IMR-90 (cell line): ENCODE measurements at regions of chr5 and their contacts with region 1.

Region 1: GRCh38 chr5:136159457-136159856 is 26.8 kb downstream of the SMAD5 start:
- DNase-seq: peak; percentile 53
- ATAC-seq: peak; percentile 88
- H3K4me3 ChIP-seq: no peak overlapping the region
- H3K27ac ChIP-seq: no peak overlapping the region
- H3K4me1 ChIP-seq: peaks cover 8% of the 10 kb centered on the region
- H3K27me3 ChIP-seq: no peaks in the 10 kb centered on the region
- CTCF ChIP-seq: no peak
- POLR2A ChIP-seq: no peak
- RAD21 ChIP-seq: no peak

Region 2: DNA sequence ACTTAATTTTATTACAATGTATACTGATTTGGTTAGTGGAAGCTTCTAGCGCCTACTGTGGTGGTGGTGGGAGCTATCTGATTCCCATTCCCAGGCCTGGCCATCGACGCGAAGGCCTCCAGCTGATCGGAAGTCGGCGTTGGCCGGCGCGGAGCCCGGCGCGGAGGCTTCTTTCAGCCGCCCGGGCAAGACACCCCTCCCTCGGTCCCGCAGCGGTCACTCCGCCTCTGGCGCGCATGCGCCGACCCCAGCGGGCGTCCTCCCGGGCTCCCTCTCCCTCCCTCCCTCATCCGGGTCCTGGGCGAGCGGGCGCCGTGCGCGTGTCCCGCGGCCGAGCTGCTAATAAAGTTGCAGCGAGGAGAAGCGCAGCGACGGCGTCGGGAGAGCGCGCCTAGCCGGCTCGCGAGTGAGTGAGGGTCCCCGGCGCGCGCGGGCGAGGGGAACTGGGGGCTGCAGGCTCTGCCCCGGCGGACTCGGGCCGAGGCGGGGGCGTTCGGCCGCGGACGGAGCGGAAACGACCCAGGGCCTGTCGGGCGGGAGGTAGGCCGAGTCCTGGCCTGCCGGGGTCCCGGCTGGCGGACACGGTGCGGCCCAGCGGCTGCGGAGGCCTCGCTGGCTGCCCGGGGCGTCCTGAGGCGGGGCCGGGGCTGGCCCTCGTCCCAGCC is 26.8 kb before region 1 on chr5 and contains the start of gene SMAD5:
- CTCF ChIA-PET with region 1: interaction called, 3 read pairs
- POLR2A ChIA-PET with region 1: no interaction called
- dilution Hi-C with region 1: no loop called
- in situ Hi-C with region 1: no loop called
- intact Hi-C with region 1: loop called (anchors 1 kb)
- DNase-seq: peak; percentile 95
- ATAC-seq: peak; percentile 94
- H3K4me3 ChIP-seq: peak within 1 kb of the TSS; percentile 81
- H3K27ac ChIP-seq: peak within 1 kb of the TSS; percentile 76
- H3K4me1 ChIP-seq: peaks cover 2% of the 10 kb centered on the region
- H3K27me3 ChIP-seq: peaks cover 5% of the 10 kb centered on the region
- CTCF ChIP-seq: 0 out of 2 replicates have a peak, but pooled peaks have one; percentile 5
- POLR2A ChIP-seq: no peak; the same call in none of the 2 replicates
- RAD21 ChIP-seq: no peak
- total RNA-seq, gene SMAD5: 73.3 and 101 TPM in 2 replicates

Region 3: DNA sequence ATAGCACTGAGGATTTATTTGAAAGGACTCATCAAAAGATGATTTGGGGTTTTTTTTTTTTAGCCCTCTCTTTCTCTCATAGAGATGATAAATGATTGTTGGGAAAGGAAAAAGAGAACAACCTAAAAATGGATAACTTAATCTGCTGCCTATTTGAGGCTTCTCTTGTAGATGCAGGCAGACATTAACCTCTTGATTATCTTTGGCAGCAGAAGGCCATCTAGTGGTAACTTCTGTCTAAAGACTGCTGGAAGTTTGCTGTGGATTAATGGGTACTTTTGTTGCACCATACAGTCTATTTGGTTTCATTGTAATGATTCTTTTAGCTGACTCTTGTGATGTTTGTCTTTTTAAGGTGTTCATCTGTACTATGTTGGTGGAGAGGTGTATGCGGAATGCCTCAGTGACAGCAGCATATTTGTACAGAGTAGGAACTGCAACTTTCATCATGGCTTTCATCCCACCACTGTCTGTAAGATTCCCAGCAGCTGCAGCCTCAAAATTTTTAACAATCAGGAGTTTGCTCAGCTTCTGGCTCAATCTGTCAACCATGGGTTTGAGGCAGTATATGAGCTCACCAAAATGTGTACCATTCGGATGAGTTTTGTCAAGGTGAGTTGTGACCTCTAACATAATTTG is 14.7 kb after region 1 on chr5:
- CTCF ChIA-PET with region 1: interaction called, 11 read pairs
- POLR2A ChIA-PET with region 1: no interaction called
- dilution Hi-C with region 1: no loop called
- in situ Hi-C with region 1: no loop called
- intact Hi-C with region 1: no loop called
- DNase-seq: peak; percentile 75
- ATAC-seq: peak; percentile 92
- H3K4me3 ChIP-seq: no peak overlapping the region
- H3K27ac ChIP-seq: no peak overlapping the region
- H3K4me1 ChIP-seq: no peaks in the 10 kb centered on the region
- H3K27me3 ChIP-seq: no peaks in the 10 kb centered on the region
- CTCF ChIP-seq: peak; percentile 72
- POLR2A ChIP-seq: no peak
- RAD21 ChIP-seq: peak; percentile 67